Posterior vena cava (tissue), 2 donors: ENCODE measurements at regions of chr16 and their contacts with region 1.

Region 1: GRCh38 chr16:10737068-10737625 is 6.5 kb upstream of the NUBP1 start:
- DNase-seq: no peak

Region 2: GRCh38 chr16:10521681-10522274 is 215.4 kb before region 1 on chr16:
- intact Hi-C with region 1: loop called (anchors 2 to 5 kb)
- DNase-seq: no peak

Region 3: GRCh38 chr16:10579965-10580882 is 156.9 kb before region 1 on chr16 and contains the start of gene EMP2:
- intact Hi-C with region 1: loop called in 1 of 2 experiments (anchors 5 kb)
- DNase-seq: peak; percentile 93
- total RNA-seq, gene EMP2: 45.8 to 68.5 TPM